Ascending aorta (tissue), 2 donors: ENCODE measurements at regions of chr10 and their contacts with region 1.

Region 1: DNA sequence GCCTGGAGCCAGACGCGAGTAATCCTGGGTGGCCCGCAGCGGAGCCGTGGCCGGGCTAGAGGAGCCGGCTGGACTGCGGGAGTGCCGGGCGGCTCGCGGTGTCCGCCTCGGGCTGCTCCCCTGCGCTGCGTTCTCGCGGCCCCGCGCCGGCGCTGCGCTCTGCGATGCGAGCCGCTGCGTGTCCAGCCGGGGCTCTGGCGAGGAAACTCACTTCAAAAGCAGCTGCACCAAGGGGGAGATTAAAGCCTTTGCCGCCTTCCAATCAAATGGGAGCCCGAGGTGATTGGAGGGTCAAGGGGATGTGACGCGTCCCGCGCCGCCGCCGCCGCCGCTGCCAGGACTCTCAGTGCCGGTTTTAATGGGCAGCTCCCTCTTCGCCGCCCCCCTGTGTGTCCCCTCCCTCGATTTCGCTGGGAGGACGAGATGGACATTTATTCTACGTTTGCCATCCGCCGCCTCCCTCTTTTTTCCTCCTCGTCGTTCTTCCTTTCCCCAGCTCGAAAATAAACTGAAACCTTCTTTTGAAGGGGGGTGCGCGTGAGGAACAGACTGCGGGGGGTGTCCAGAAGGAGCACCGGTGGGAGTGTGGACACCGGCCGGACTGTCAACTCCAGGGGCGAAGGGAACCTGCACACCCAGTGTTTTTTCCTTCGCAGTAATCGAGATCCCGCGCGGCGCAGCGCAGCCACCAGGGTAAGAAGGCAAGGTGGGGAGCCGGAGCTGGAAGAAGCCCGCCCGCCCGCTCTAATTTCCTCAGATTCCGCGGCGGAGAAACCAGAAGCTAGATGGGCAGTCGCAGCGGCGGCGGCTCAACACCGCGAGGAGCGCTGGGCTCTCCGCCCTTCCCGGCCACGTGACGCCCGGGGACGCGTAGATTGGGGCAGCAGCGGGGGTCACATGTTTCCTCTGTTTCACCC is at the start of gene ZNF503:
- DNase-seq: peak; percentile 94 to 99
- H3K4me3 ChIP-seq: peak within 1 kb of the TSS; percentile 89 to 95
- H3K27ac ChIP-seq: peak within 1 kb of the TSS; percentile 97 to 98
- H3K4me1 ChIP-seq: peaks cover 0 to 9% of the 10 kb centered on the region in 2 donors
- H3K27me3 ChIP-seq: no peaks in the 10 kb centered on the region
- CTCF ChIP-seq: peak in 2 of 3 experiments; percentile 30 to 54
- total RNA-seq, gene ZNF503: 28.8 TPM

Region 2: GRCh38 chr10:75663947-75664664 is 262.3 kb after region 1 on chr10:
- intact Hi-C with region 1: loop called (anchors 2 kb)
- DNase-seq: no peak
- H3K4me3 ChIP-seq: no peak overlapping the region
- H3K27ac ChIP-seq: peak overlapping the region; percentile 87 to 89
- H3K4me1 ChIP-seq: peaks cover 0 to 55% of the 10 kb centered on the region in 2 donors
- H3K27me3 ChIP-seq: no peaks in the 10 kb centered on the region
- CTCF ChIP-seq: no peak

Region 3: GRCh38 chr10:75922435-75922834 is 520.6 kb after region 1 on chr10:
- intact Hi-C with region 1: loop called (anchors 5 kb)
- DNase-seq: no peak
- H3K4me3 ChIP-seq: no peak overlapping the region
- H3K27ac ChIP-seq: no peak overlapping the region
- H3K4me1 ChIP-seq: no peaks in the 10 kb centered on the region
- H3K27me3 ChIP-seq: no peaks in the 10 kb centered on the region
- CTCF ChIP-seq: peak in 1 of 3 experiments; percentile 30

Region 4: DNA sequence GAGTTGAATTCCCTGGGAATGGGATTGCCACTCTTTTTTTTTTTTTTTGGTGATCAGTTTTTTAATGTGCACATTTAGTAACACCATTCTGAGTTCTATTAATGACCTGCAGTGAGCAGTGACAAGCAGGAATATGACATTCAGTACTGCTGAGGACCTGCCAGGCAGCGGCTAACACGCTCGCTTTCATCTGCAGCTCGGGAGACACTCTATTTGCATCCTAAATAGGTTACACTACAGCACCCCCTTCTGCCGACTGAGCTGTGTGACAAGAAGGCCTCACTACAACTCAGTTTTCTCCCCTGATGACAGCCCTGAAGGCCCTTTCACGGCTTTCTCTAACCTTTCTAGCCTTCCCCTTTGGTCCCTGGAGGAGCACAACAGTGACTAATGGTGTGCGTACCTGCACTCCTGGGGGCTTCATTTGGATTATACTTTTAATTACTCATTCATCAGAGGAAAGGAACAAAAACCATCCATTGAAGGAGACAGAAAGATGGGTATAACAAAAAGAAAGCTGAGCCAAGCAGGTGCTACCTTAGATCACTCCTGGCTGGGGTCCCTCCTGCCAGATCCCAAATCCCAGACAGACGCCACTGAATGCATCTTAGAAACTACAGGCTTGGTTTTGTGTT is 902.0 kb after region 1 on chr10:
- intact Hi-C with region 1: loop called (anchors 5 kb)
- DNase-seq: peak; percentile 22 to 85
- H3K4me3 ChIP-seq: peak overlapping the region in 1 of 2 donors; percentile 10
- H3K27ac ChIP-seq: no peak overlapping the region
- H3K4me1 ChIP-seq: peaks cover 0 to 4% of the 10 kb centered on the region in 2 donors
- H3K27me3 ChIP-seq: no peaks in the 10 kb centered on the region
- CTCF ChIP-seq: peak; percentile 38 to 66 (median 56)

Region 5: GRCh38 chr10:76547352-76547972 is 1145.6 kb after region 1 on chr10:
- intact Hi-C with region 1: loop called (anchors 5 kb)
- DNase-seq: peak in 1 of 2 donors; percentile 91
- H3K4me3 ChIP-seq: peak overlapping the region in 1 of 2 donors; percentile 42
- H3K27ac ChIP-seq: no peak overlapping the region
- H3K4me1 ChIP-seq: peaks cover 0 to 3% of the 10 kb centered on the region in 2 donors
- H3K27me3 ChIP-seq: no peaks in the 10 kb centered on the region
- CTCF ChIP-seq: peak; percentile 81 to 92 (median 84)

Region 6: DNA sequence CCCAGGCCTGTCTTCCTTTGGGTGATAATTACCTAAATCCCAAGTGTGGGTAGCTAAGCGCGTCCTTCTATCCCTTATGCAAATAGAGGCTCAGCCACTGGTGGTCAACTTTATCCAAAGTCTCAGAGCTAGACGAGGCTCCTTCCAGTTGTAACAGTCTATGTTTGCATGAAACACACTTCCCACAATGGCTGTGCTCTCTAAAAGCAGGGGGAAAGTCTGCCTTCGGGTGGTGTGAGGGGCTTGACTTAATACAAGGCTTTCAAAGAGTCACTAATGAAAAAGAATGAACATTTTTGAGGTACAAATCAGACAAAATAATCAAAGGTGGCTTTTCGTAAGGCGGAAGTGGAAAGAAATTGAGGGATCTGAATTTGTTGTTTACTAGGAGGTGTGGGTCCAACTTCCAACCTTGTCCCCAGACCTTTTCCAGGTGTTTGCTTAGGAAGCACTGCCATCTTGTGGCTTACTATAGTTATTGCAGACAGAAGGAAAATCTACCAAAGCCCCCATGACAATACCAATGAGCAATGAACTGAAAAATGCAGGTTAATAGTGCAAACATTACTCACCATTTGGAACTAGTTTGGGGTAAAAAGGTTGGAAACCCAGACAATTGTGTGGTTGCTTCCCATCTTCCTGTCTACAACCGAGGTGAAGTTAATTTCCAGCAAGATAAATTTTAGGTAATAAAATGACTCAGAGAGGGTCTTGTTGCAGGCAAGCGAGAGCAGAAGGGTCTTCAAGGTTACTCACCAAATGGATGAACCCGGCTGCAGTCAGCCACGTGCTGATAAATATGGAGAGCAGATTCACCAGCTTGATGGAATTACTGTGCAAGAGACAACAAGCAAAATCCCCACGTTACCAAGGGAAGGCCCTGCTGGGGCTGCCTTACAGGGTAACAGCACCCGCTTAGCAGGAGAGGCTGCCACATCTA is 1710.1 kb after region 1 on chr10:
- intact Hi-C with region 1: loop called (anchors 5 kb)
- DNase-seq: no peak
- H3K4me3 ChIP-seq: no peak overlapping the region
- H3K27ac ChIP-seq: peak overlapping the region; percentile 75 to 82
- H3K4me1 ChIP-seq: peaks cover 14 to 31% of the 10 kb centered on the region in 2 donors
- H3K27me3 ChIP-seq: no peaks in the 10 kb centered on the region
- CTCF ChIP-seq: peak; percentile 73 to 86 (median 76)